ENCODE measurements at regions of chr10 and their contacts with region 1.

Region 1: GRCh38 chr10:133378251-133379096 is 588 bp upstream of the PAOX start:
- DNase-seq: peak in 1 of 2 donors; percentile 82
- H3K4me3 ChIP-seq: peak overlapping the region; percentile 81 to 96
- H3K27ac ChIP-seq: peak overlapping the region; percentile 82 to 95
- H3K4me1 ChIP-seq: peaks cover 0 to 28% (median 21%) of the 10 kb centered on the region in 4 donors
- H3K27me3 ChIP-seq: no peaks in the 10 kb centered on the region
- CTCF ChIP-seq: no peak

Region 2: DNA sequence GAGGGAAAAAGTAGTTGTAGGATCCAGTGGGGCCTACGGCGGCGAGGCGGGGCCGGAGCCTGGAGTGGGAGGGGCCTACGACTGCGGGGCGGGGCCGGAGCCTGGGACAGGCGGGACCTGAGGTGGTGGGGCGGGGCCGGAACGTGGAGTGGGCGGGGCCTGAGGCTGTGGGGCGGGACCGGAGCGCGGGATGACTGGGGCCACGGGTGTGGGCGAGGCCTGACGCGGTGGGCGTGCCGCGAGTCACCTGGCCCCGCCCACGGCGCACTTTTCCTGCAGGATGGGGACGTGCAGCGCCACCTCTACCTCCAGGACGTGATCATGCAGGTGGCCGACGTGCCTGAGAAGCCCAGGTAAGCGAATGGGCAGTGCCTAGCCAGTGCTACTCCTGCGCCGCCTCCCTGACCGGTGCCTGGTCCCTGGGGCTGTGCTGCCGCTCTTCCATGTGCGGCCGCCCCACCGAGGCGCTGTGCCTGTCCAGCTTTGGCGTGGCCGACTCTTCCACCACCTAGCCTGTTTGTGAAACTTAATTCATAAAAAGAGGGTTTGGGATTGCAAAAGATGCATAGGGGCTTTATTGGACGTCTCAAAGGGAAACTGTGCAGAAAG is 69.3 kb before region 1 on chr10:
- intact Hi-C with region 1: loop called (anchors 5 kb)
- DNase-seq: peak; percentile 84 to 93
- H3K4me3 ChIP-seq: peak overlapping the region; percentile 86 to 93
- H3K27ac ChIP-seq: peak overlapping the region; percentile 90 to 93
- H3K4me1 ChIP-seq: peaks cover 5 to 34% (median 26%) of the 10 kb centered on the region in 4 donors
- H3K27me3 ChIP-seq: no peaks in the 10 kb centered on the region
- CTCF ChIP-seq: no peak

Region 3: GRCh38 chr10:133422821-133423771 is 44.6 kb after region 1 on chr10:
- intact Hi-C with region 1: no loop called
- DNase-seq: peak in 1 of 2 donors; percentile 64
- H3K4me3 ChIP-seq: no peak overlapping the region
- H3K27ac ChIP-seq: no peak overlapping the region
- H3K4me1 ChIP-seq: peaks cover 0 to 14% (median 10%) of the 10 kb centered on the region in 4 donors
- H3K27me3 ChIP-seq: peaks cover 0 to 55% of the 10 kb centered on the region in 2 donors
- CTCF ChIP-seq: no peak

Measured in tibial artery (tissue), 4 donors.